Activated CD4-positive, alpha-beta T cell treated with anti-CD3 and anti-CD28 coated beads for 36 hours (primary cell): ENCODE measurements at regions of chr10 and their contacts with region 1.

Region 1: DNA sequence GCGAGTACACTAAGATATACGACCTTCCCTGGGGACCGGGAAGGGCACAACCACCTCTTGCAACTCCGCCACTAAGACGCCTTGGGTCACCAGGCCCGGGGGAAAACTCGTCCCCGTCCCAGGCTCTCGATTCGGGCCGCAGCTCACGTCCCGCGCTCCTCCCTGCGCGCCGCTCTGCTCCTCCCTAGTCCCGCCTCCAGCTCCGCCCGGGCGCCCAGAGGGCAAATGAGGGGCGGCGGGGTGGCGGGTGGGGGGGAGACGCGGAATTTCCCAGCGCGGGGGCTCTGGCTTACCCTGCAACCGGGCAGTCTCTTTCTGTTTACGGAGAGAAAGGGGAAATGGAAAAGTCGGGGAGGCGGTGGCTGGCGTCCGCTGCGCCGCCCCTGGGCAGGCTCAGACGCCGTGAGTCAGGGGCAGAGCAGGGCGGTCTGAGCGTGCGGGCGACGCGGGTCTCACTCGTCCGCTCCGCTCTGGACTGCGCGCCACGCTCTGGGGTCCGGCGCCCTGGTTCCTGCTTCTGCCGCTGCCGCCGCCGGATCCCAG is at the start of gene MAP3K8:
- DNase-seq: peak; percentile 93
- ATAC-seq: peak; percentile 73
- H3K4me3 Mint-ChIP-seq: peak within 1 kb of the TSS; percentile 92
- H3K27ac Mint-ChIP-seq: peak within 1 kb of the TSS; percentile 74
- H3K4me1 Mint-ChIP-seq: peaks cover 46% of the 10 kb centered on the region
- H3K27me3 Mint-ChIP-seq: no peaks in the 10 kb centered on the region
- total RNA-seq, gene MAP3K8: 19.9 to 22.9 TPM

Region 2: GRCh38 chr10:28532383-28533175 is 1901.2 kb before region 1 on chr10 and contains the start of gene WAC:
- CTCF ChIA-PET with region 1: no interaction called
- POLR2A ChIA-PET with region 1: no interaction called
- intact Hi-C with region 1: loop called in 1 of 2 experiments (anchors 10 kb)
- DNase-seq: peak; percentile 99
- ATAC-seq: peak; percentile 88
- H3K4me3 Mint-ChIP-seq: peak within 1 kb of the TSS; percentile 95
- H3K27ac Mint-ChIP-seq: peak within 1 kb of the TSS; percentile 100
- H3K4me1 Mint-ChIP-seq: peaks cover 56% of the 10 kb centered on the region
- H3K27me3 Mint-ChIP-seq: no peaks in the 10 kb centered on the region
- total RNA-seq, gene WAC: 103 to 136 TPM

Region 3: GRCh38 chr10:29735596-29736318 is 698.0 kb before region 1 on chr10:
- CTCF ChIA-PET with region 1: no interaction called
- POLR2A ChIA-PET with region 1: no interaction called
- intact Hi-C with region 1: loop called in 1 of 2 experiments (anchors 10 kb)
- DNase-seq: peak; percentile 92
- ATAC-seq: peak; percentile 86
- H3K4me3 Mint-ChIP-seq: peak overlapping the region; percentile 74
- H3K27ac Mint-ChIP-seq: no peak overlapping the region
- H3K4me1 Mint-ChIP-seq: peaks cover 33% of the 10 kb centered on the region
- H3K27me3 Mint-ChIP-seq: peaks cover 6% of the 10 kb centered on the region

Region 4: GRCh38 chr10:30324448-30325110 is 109.2 kb before region 1 on chr10:
- CTCF ChIA-PET with region 1: no interaction called
- POLR2A ChIA-PET with region 1: no interaction called
- intact Hi-C with region 1: no loop called
- DNase-seq: no peak
- ATAC-seq: no peak
- H3K4me3 Mint-ChIP-seq: no peak overlapping the region
- H3K27ac Mint-ChIP-seq: no peak overlapping the region
- H3K4me1 Mint-ChIP-seq: peaks cover 2% of the 10 kb centered on the region
- H3K27me3 Mint-ChIP-seq: no peaks in the 10 kb centered on the region

Region 5: DNA sequence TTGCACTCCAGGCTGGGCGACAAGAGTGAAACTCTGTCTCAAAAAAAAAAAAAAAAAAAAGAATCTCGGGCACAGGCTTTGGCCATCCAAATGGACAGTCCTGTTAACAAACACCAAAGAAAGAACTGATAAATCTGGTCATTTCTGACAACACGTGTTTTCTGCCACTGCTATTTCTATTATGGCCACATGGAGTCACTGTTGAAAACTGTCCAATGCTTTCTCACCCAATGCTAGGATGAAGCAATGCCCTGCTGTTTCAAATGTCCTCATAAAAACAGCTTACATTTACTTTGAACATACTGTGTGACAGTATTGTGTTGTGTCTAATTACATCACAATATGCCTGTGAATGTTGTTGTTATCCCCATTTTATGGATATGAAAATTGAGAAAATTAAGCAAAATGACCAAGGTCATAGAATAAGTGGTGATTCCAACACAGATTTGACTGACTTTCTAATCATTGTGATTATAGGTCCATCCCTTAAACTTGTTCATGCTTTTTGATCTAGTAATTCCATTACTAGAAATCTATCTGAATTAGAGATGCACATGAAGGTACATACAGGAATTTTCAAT is 19.7 kb before region 1 on chr10:
- CTCF ChIA-PET with region 1: interaction called, 6 read pairs
- POLR2A ChIA-PET with region 1: interaction called, 5 read pairs
- intact Hi-C with region 1: loop called (anchors 1 kb)
- DNase-seq: no peak
- ATAC-seq: peak; percentile 39
- H3K4me3 Mint-ChIP-seq: no peak overlapping the region
- H3K27ac Mint-ChIP-seq: no peak overlapping the region
- H3K4me1 Mint-ChIP-seq: peaks cover 18% of the 10 kb centered on the region
- H3K27me3 Mint-ChIP-seq: no peaks in the 10 kb centered on the region

Region 6: DNA sequence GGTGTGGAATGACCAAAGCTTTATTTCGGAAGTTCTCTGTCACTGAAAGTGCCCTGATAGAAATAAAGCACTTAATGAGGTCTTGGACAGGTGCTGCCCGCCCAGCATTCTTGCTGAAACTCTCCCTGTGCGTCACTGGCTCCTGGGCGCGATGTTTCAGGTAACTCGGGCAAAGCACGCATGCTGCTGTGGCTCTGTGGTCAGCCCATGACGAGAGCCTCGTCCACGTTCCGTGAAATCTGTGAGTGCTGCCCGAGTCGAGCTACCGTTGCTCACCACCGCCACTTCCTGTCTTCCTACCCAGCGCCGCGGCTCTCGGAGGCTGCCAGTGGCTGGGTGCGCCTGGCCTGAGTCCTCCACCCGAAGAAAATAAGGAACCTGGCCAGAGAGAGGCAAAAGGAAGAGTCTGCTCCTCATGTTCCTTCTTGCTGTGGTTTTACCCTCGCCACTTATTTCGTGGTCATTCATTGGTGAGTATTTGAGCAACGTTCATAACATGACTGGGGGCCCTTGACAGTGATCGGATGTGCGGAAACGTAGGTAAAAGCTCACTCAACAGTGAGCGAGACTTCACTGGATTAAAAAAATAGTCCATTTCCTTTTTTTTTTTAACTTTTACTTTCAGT is 95.7 kb after region 1 on chr10:
- CTCF ChIA-PET with region 1: interaction called, 6 read pairs
- POLR2A ChIA-PET with region 1: interaction called, 3 read pairs
- intact Hi-C with region 1: loop called (anchors 1 kb)
- DNase-seq: peak; percentile 86
- ATAC-seq: peak; percentile 83
- H3K4me3 Mint-ChIP-seq: peak overlapping the region; percentile 75
- H3K27ac Mint-ChIP-seq: peak overlapping the region; percentile 95
- H3K4me1 Mint-ChIP-seq: peaks cover 56% of the 10 kb centered on the region
- H3K27me3 Mint-ChIP-seq: no peaks in the 10 kb centered on the region

Region 7: DNA sequence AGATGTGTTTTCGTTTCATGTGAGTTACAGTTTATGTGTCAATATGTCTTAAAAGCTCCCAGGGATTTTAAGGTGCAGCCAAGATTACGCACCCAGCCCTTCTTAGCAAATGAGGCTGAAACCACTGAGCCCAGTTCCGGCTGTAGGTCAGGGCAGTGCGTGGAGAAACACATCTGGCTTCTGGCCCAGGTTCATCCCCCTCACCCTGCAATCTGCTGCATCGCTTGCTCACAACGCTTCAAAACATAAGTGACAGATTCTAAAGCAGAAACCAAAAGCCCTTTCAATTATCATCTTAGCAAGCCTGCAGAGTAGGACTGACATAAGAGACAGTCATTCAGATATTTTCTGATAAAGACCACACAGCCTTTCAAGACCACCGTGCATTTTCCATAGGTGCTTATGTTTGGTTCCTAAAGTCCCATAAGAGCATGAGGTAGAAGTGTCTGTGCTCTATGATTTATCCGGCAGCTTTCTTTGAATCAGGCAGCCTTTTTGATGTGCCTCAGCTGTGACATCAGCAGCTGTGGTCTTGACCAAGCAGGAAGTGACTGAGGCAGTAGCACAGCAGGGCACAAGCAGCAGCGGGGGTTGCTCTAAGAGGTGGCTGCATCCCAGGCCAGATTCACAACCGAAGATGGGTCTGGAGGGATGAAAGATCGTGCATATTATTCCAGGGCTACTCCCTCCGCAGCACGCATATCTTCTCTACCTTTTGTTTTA is 267.8 kb after region 1 on chr10:
- CTCF ChIA-PET with region 1: no interaction called
- POLR2A ChIA-PET with region 1: no interaction called
- intact Hi-C with region 1: loop called (anchors 2 to 5 kb)
- DNase-seq: peak; percentile 93
- ATAC-seq: peak; percentile 73
- H3K4me3 Mint-ChIP-seq: peak overlapping the region; percentile 86
- H3K27ac Mint-ChIP-seq: peak overlapping the region; percentile 90
- H3K4me1 Mint-ChIP-seq: peaks cover 87% of the 10 kb centered on the region
- H3K27me3 Mint-ChIP-seq: no peaks in the 10 kb centered on the region

Region 8: DNA sequence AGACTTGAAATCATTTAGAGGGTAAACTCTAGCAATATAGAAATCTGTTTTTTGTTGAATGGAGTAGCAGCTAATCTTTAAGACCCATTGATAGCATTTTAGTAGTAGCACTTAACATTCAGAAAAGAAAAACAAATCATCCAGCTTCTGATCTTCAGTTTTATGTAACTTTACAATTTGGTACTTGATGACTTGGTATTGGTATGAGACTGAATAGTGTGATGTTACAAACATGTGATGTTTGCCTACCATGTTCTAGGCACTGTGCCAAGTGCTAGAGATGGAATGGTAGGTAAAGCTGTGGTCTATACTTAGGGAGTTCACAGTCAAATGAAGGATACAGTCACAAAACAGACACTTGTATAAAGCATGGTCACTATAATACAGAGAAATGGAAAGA is 906.5 kb after region 1 on chr10:
- CTCF ChIA-PET with region 1: no interaction called
- POLR2A ChIA-PET with region 1: no interaction called
- intact Hi-C with region 1: loop called in 1 of 2 experiments (anchors 10 kb)
- DNase-seq: peak; percentile 52
- ATAC-seq: peak; percentile 45
- H3K4me3 Mint-ChIP-seq: no peak overlapping the region
- H3K27ac Mint-ChIP-seq: no peak overlapping the region
- H3K4me1 Mint-ChIP-seq: peaks cover 22% of the 10 kb centered on the region
- H3K27me3 Mint-ChIP-seq: no peaks in the 10 kb centered on the region